Activated naive CD4-positive, alpha-beta T cell treated with anti-CD3 and anti-CD28 coated beads for 36 hours (primary cell): ENCODE measurements at regions of chr7 and their contacts with region 1.

Region 1: GRCh38 chr7:150322833-150323681 is at the starts of genes ACTR3C and LRRC61:
- DNase-seq: peak; percentile 71
- H3K4me3 Mint-ChIP-seq: peak within 1 kb of the TSS; percentile 95
- H3K27ac Mint-ChIP-seq: peak within 1 kb of the TSS; percentile 99
- H3K4me1 Mint-ChIP-seq: peaks cover 46% of the 10 kb centered on the region
- H3K27me3 Mint-ChIP-seq: no peaks in the 10 kb centered on the region
- total RNA-seq, gene ACTR3C: 3.1 to 3.4 TPM
- total RNA-seq, gene LRRC61: 10.3 to 13.3 TPM

Region 2: DNA sequence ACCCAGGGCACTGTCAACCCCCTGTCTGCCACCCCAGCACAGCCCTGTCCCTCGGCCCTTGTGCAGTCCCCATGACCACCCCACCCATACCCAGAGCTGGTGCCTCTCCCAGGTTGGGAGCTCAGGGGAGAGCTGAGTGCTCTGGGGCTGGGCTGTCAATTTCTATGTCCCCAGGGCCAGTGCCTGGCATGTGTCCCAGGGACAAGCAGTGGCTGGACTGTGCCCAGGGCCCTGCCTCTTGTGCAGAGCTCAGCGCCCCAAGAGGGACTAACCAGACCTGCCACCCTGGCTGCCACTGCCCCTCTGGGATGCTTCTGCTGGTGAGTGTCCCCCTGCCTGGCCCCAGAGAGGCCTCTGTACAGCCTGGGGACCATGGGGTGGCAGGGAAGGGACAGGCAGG is 513.8 kb before region 1 on chr7:
- CTCF ChIA-PET with region 1: no interaction called
- intact Hi-C with region 1: no loop called
- DNase-seq: no peak
- H3K4me3 Mint-ChIP-seq: no peak overlapping the region
- H3K27ac Mint-ChIP-seq: no peak overlapping the region
- H3K4me1 Mint-ChIP-seq: no peaks in the 10 kb centered on the region
- H3K27me3 Mint-ChIP-seq: no peaks in the 10 kb centered on the region

Region 3: GRCh38 chr7:149873074-149873969 is 449.7 kb before region 1 on chr7 and contains the start of gene ATP6V0E2:
- CTCF ChIA-PET with region 1: no interaction called
- intact Hi-C with region 1: loop called (anchors 2 kb)
- DNase-seq: peak; percentile 94
- H3K4me3 Mint-ChIP-seq: peak within 1 kb of the TSS; percentile 83
- H3K27ac Mint-ChIP-seq: peak within 1 kb of the TSS; percentile 88
- H3K4me1 Mint-ChIP-seq: peaks cover 72% of the 10 kb centered on the region
- H3K27me3 Mint-ChIP-seq: no peaks in the 10 kb centered on the region
- total RNA-seq, gene ATP6V0E2: 31.8 to 32.4 TPM

Region 4: GRCh38 chr7:150356265-150356897 is 33.3 kb after region 1 on chr7:
- CTCF ChIA-PET with region 1: interaction called, 6 read pairs
- intact Hi-C with region 1: loop called (anchors 2 kb)
- DNase-seq: peak; percentile 28
- H3K4me3 Mint-ChIP-seq: no peak overlapping the region
- H3K27ac Mint-ChIP-seq: no peak overlapping the region
- H3K4me1 Mint-ChIP-seq: peaks cover 40% of the 10 kb centered on the region
- H3K27me3 Mint-ChIP-seq: no peaks in the 10 kb centered on the region

Region 5: GRCh38 chr7:150378853-150379440 is 55.9 kb after region 1 on chr7 and contains the start of gene ZNF775:
- CTCF ChIA-PET with region 1: interaction called, 3 read pairs
- intact Hi-C with region 1: loop called (anchors 1 kb)
- DNase-seq: peak; percentile 94
- H3K4me3 Mint-ChIP-seq: peak within 1 kb of the TSS; percentile 87
- H3K27ac Mint-ChIP-seq: peak within 1 kb of the TSS; percentile 77
- H3K4me1 Mint-ChIP-seq: peaks cover 47% of the 10 kb centered on the region
- H3K27me3 Mint-ChIP-seq: no peaks in the 10 kb centered on the region
- total RNA-seq, gene ZNF775: 4.5 to 5.2 TPM

Region 6: GRCh38 chr7:150420987-150421674 is 98.1 kb after region 1 on chr7:
- CTCF ChIA-PET with region 1: no interaction called
- intact Hi-C with region 1: loop called (anchors 1 kb)
- DNase-seq: peak; percentile 94
- H3K4me3 Mint-ChIP-seq: peak overlapping the region; percentile 4
- H3K27ac Mint-ChIP-seq: no peak overlapping the region
- H3K4me1 Mint-ChIP-seq: peaks cover 12% of the 10 kb centered on the region
- H3K27me3 Mint-ChIP-seq: peaks cover 2% of the 10 kb centered on the region

Region 7: GRCh38 chr7:150567169-150567568 is 244.1 kb after region 1 on chr7 and contains the start of gene GIMAP4:
- CTCF ChIA-PET with region 1: no interaction called
- intact Hi-C with region 1: loop called (anchors 5 kb)
- DNase-seq: peak; percentile 64
- H3K4me3 Mint-ChIP-seq: peak within 1 kb of the TSS; percentile 85
- H3K27ac Mint-ChIP-seq: peak within 1 kb of the TSS; percentile 96
- H3K4me1 Mint-ChIP-seq: peaks cover 66% of the 10 kb centered on the region
- H3K27me3 Mint-ChIP-seq: no peaks in the 10 kb centered on the region
- total RNA-seq, gene GIMAP4: 180 to 193 TPM

Region 8: DNA sequence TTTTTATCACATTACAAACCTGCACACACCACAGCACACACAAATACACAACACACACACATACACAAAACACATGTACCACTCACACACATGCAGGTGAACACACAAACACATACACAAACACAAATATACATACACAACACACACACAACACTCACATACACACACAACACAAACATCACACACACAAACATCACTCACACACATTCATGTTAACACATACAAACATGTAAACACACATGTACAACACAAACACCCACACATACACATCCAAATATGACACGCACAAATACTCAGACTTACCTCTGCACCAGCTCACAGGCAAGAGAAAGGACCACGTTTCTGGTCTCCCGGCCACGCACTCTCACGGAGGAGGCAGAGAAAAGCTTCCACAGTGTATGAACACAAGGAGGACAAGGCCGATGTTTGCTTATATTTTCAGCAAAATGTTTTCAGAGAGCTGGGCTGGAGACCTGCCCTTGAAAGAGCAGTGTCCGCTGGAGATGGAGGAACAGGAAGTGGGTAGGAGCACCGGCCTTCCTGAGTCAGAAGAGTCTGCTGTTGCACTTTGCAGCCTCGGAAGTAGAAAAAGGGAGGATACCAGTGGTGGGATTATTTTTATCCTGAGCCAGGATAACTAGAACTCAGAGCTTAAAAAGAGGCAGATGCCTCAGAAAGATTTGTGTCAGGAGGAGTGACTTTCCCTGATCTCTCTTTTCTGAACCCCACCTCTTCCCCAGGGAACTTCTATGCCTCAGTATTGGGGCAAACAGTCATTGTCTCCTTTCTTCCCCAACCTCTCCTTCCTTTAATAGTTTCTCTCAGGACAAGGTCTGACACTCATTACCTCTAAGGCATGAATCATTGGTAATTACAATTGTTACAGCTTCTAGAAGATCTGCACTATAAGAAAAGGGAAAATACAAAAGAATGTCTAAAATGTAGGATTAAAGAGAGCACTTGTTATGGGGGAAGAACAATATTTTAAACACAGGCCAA is 309.1 kb after region 1 on chr7 and contains the start of gene GIMAP6:
- CTCF ChIA-PET with region 1: no interaction called
- intact Hi-C with region 1: no loop called
- DNase-seq: peak; percentile 64
- H3K4me3 Mint-ChIP-seq: peak within 1 kb of the TSS; percentile 85
- H3K27ac Mint-ChIP-seq: peak within 1 kb of the TSS; percentile 92
- H3K4me1 Mint-ChIP-seq: peaks cover 67% of the 10 kb centered on the region
- H3K27me3 Mint-ChIP-seq: no peaks in the 10 kb centered on the region
- total RNA-seq, gene GIMAP6: 19.2 to 20.7 TPM

Region 9: GRCh38 chr7:151080522-151081169 is 757.6 kb after region 1 on chr7 and contains the start of gene FASTK:
- CTCF ChIA-PET with region 1: no interaction called
- intact Hi-C with region 1: loop called (anchors 5 kb)
- DNase-seq: peak; percentile 93
- H3K4me3 Mint-ChIP-seq: peak within 1 kb of the TSS; percentile 86
- H3K27ac Mint-ChIP-seq: peak within 1 kb of the TSS; percentile 73
- H3K4me1 Mint-ChIP-seq: peaks cover 36% of the 10 kb centered on the region
- H3K27me3 Mint-ChIP-seq: peaks cover 7% of the 10 kb centered on the region
- total RNA-seq, gene FASTK: 43.6 to 45.7 TPM